AG04450 (cell line): ENCODE measurements at regions of chr20 and their contacts with region 1.

Region 1: DNA sequence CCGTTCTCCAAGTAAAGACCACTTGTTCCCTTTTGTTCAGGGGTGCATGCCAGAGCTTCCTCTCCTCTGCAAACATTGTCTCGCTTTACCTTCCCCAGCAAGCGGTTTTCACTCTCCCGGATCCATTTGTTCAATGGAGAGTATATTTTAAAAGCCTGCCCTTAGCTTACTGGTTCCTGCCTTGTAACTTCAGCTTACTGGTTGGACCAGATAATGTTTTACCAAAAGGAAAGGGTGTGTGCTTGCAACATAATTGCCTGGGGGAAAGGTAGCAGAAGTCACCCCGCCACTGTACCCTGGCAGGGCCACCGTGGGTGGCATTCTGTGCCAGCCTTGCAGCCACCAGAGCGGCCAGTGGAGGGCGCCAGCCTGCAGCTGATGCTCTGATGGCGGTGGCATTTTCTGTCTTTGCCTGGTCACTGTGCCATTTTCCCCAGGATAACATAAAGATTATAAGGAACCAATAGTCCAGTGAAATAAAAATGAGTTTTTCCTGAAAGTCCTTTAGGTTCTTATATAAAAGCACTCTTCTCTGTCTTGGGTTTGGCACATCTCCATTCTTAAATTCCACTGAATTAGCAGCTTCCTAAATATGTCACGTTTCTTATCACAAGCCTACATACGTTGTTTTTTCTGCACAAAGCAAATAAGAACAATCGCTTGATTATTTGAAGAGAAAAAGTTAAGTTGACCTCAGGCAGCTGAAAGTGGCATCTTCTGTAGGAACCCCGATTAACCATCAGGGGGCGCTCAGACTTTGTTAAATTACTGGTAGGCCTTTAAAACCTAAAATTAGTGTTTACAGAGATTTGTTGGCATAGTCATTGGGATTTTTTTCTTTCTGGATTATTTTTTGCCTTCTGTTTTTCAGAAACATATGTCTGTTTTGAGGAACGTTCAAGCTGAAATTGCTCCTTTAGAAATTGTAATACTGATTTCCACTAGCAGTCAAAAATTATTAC is 67.4 kb upstream of the XRN2 start:
- DNase-seq: peak; percentile 32
- H3K4me3 ChIP-seq: no peak overlapping the region
- H3K27ac ChIP-seq: no peak overlapping the region
- H3K27me3 ChIP-seq: no peaks in the 10 kb centered on the region
- CTCF ChIP-seq: peak; percentile 77

Region 2: DNA sequence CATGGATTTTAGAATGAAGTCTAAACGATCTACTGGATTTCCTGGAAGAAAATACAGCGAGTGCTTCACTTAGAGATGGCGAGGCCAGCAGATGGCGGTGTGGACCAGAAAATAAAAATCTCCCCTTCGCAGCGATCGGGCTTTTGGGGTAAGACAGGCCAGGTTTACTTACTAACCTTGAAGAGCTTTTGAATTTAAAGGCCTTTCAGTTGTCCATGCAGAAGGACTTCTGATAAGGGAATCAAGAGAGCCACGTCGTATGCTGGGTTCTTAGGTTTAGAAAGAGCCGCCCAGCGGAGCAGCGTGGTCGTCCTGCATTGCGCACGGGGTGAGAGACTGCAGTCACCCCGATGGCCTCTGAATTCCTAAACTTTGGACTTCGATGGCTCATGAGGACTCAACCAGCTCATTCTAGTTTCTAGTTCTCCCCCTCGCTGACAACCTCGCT is 398.2 kb before region 1 on chr20:
- CTCF ChIA-PET with region 1: interaction called, 21 read pairs
- POLR2A ChIA-PET with region 1: no interaction called
- DNase-seq: peak; percentile 11
- H3K4me3 ChIP-seq: no peak overlapping the region
- H3K27ac ChIP-seq: no peak overlapping the region
- H3K27me3 ChIP-seq: no peaks in the 10 kb centered on the region
- CTCF ChIP-seq: peak; percentile 67

Region 3: GRCh38 chr20:21020659-21021471 is 214.9 kb before region 1 on chr20:
- CTCF ChIA-PET with region 1: no interaction called
- POLR2A ChIA-PET with region 1: no interaction called
- DNase-seq: no peak
- H3K4me3 ChIP-seq: no peak overlapping the region
- H3K27ac ChIP-seq: no peak overlapping the region
- H3K27me3 ChIP-seq: no peaks in the 10 kb centered on the region
- CTCF ChIP-seq: no peak

Region 4: GRCh38 chr20:21074605-21075336 is 161.0 kb before region 1 on chr20:
- CTCF ChIA-PET with region 1: no interaction called
- POLR2A ChIA-PET with region 1: no interaction called
- DNase-seq: no peak
- H3K4me3 ChIP-seq: no peak overlapping the region
- H3K27ac ChIP-seq: no peak overlapping the region
- H3K27me3 ChIP-seq: no peaks in the 10 kb centered on the region
- CTCF ChIP-seq: no peak

Region 5: DNA sequence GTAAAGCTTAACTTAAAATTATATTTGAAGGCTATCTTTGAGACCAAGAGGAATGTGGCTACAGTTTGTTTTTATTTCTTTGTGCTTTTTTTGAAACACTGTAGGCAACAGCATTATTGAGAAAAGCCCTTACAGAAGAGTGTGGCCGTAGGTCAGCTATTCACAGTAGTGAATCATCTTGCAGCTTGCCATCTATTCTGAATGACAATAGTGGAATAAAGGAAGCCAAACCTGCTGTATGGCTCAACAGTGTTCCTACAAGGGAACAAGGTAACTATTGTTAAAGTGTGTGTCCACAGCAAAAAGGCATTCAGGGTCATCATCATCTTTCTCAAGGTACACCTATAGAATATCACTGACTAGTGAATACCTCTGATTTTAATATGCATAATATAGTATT is 21.3 kb before region 1 on chr20:
- CTCF ChIA-PET with region 1: interaction called, 18 read pairs
- POLR2A ChIA-PET with region 1: no interaction called
- DNase-seq: no peak
- H3K4me3 ChIP-seq: no peak overlapping the region
- H3K27ac ChIP-seq: no peak overlapping the region
- H3K27me3 ChIP-seq: no peaks in the 10 kb centered on the region
- CTCF ChIP-seq: no peak

Region 6: GRCh38 chr20:21273755-21274387 is 38.1 kb after region 1 on chr20:
- CTCF ChIA-PET with region 1: interaction called, 16 read pairs
- POLR2A ChIA-PET with region 1: no interaction called
- DNase-seq: no peak
- H3K4me3 ChIP-seq: no peak overlapping the region
- H3K27ac ChIP-seq: no peak overlapping the region
- H3K27me3 ChIP-seq: peaks cover 3% of the 10 kb centered on the region
- CTCF ChIP-seq: no peak

Region 7: GRCh38 chr20:21342656-21343345 is 107.0 kb after region 1 on chr20:
- CTCF ChIA-PET with region 1: interaction called, 11 read pairs
- POLR2A ChIA-PET with region 1: no interaction called
- DNase-seq: peak; percentile 21
- H3K4me3 ChIP-seq: no peak overlapping the region
- H3K27ac ChIP-seq: no peak overlapping the region
- H3K27me3 ChIP-seq: no peaks in the 10 kb centered on the region
- CTCF ChIP-seq: no peak

Region 8: DNA sequence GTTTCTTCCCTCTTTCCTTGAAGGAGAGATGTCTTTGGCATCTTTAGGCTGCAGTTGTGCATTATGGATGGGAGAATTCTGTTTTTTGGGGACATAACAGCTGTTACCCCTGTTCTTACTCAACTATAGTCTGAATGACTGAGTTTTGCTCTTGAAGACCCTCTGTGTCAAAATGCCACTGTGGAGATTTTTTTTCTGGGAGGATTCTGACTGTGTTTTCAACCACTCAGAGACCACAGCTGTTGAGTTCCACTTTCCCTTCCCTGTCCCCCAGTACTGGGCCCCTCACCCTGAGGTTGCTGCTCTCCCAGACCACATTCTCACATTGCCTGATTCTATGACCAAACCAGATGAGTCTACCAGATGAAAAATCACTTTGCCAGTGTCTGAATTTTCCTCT is 230.0 kb after region 1 on chr20:
- CTCF ChIA-PET with region 1: interaction called, 11 read pairs
- POLR2A ChIA-PET with region 1: no interaction called
- DNase-seq: no peak
- H3K4me3 ChIP-seq: no peak overlapping the region
- H3K27ac ChIP-seq: no peak overlapping the region
- H3K27me3 ChIP-seq: peaks cover 3% of the 10 kb centered on the region
- CTCF ChIP-seq: no peak

Region 9: DNA sequence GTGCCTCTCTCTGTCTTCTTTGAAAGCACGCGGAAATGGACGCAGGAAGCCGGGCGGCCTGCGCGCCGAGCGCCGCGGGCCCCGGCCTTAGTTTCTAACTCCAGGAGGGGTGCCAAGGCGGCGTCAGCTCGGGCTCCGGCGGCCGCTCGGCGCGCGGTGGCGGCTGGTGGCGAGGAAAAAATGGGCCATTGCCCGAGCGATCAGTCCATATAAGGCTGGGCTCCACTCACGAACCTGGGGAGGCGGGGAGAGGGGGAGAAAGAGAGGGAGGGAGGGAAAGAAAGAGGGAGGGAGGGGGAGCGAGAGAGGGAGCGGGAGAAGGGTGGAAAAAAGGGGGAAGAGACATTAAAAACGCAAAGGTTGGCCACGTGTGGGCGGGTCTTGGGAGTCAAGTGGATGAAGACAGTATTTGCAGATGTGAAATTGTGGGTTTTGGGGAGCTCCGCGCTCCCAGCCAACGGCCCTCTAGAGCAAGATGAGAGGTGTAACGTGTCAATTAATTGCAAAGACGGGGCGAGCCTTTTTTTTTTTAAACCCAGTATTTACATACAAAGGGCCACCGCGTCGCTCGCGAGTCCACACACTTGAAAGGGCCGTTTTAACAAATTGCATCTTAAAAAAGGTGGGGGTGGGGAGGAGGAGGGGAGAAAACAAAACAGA is 278.2 kb after region 1 on chr20 and contains the start of gene NKX2-2:
- CTCF ChIA-PET with region 1: interaction called, 19 read pairs
- POLR2A ChIA-PET with region 1: no interaction called
- DNase-seq: no peak
- H3K4me3 ChIP-seq: no peak within 1 kb of the TSS
- H3K27ac ChIP-seq: no peak within 1 kb of the TSS
- H3K27me3 ChIP-seq: peaks cover 92% of the 10 kb centered on the region
- CTCF ChIP-seq: no peak
- polyA plus RNA-seq, gene NKX2-2: not detected in 2 replicates